Activated T-helper 2 cell treated with anti-CD3 and anti-CD28 coated beads, Interferon-gamma antibody, Interleukin-2, Interleukin-4, amounts not matched to agents 10 μg/mL and 5 μg/mL and 100 μg/mL, durations not matched to agents 14 hours and 24 hours and 36 hours (primary cell): ENCODE measurements at regions of chr10 and their contacts with region 1.

Region 1: GRCh38 chr10:133394064-133394663 is at the start of gene MTG1:
- DNase-seq: peak; percentile 93
- H3K4me3 Mint-ChIP-seq: peak within 1 kb of the TSS; percentile 96
- H3K27ac Mint-ChIP-seq: peak within 1 kb of the TSS; percentile 96
- H3K4me1 Mint-ChIP-seq: peaks cover 34% of the 10 kb centered on the region
- H3K27me3 Mint-ChIP-seq: no peaks in the 10 kb centered on the region
- total RNA-seq, gene MTG1: 67.6 and 69.0 TPM in 2 replicates

Region 2: GRCh38 chr10:133276435-133277201 is 117.5 kb before region 1 on chr10 and contains the start of gene ADAM8:
- intact Hi-C with region 1: loop called (anchors 1 kb)
- DNase-seq: peak; percentile 66
- H3K4me3 Mint-ChIP-seq: peak within 1 kb of the TSS; percentile 91
- H3K27ac Mint-ChIP-seq: peak within 1 kb of the TSS; percentile 84
- H3K4me1 Mint-ChIP-seq: peaks cover 18% of the 10 kb centered on the region
- H3K27me3 Mint-ChIP-seq: no peaks in the 10 kb centered on the region
- total RNA-seq, gene ADAM8: 214 and 220 TPM in 2 replicates

Region 3: DNA sequence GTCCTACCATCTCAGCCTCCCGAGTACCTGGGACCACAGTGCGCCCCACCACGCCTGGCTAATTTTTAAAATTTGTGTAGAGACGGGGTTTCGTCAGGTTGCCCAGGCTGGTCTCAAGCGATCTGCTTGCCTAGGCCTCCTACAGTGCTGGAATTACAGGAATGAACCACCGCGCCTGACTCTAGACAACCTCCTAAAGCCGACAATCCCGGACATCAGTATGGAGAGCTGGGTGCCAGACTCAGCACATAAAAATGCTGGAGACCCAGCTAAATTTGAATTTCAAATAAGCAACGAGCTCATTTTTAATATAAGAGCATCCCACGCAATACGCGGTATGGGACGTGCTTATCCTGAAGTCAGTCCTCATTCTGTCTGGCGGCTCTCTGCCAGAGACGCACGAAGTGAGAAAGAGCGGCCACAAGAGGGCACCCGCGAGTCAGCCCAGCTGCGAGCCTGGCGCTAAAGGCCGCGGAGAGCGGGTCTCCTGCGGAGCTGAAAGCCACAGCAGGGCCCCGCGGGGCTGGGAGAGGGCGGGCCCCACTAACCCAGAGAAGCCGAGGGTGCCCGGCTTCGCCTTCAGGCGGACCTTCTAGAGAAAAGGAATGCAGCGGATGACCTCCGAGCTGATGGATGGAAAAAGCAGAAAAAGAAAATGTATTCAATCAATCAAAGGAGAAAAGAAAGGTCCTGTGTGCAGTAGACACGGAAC is 64.5 kb before region 1 on chr10:
- intact Hi-C with region 1: loop called (anchors 5 kb)
- DNase-seq: peak; percentile 76
- H3K4me3 Mint-ChIP-seq: peak overlapping the region; percentile 60
- H3K27ac Mint-ChIP-seq: no peak overlapping the region
- H3K4me1 Mint-ChIP-seq: no peaks in the 10 kb centered on the region
- H3K27me3 Mint-ChIP-seq: peaks cover 63% of the 10 kb centered on the region

Region 4: DNA sequence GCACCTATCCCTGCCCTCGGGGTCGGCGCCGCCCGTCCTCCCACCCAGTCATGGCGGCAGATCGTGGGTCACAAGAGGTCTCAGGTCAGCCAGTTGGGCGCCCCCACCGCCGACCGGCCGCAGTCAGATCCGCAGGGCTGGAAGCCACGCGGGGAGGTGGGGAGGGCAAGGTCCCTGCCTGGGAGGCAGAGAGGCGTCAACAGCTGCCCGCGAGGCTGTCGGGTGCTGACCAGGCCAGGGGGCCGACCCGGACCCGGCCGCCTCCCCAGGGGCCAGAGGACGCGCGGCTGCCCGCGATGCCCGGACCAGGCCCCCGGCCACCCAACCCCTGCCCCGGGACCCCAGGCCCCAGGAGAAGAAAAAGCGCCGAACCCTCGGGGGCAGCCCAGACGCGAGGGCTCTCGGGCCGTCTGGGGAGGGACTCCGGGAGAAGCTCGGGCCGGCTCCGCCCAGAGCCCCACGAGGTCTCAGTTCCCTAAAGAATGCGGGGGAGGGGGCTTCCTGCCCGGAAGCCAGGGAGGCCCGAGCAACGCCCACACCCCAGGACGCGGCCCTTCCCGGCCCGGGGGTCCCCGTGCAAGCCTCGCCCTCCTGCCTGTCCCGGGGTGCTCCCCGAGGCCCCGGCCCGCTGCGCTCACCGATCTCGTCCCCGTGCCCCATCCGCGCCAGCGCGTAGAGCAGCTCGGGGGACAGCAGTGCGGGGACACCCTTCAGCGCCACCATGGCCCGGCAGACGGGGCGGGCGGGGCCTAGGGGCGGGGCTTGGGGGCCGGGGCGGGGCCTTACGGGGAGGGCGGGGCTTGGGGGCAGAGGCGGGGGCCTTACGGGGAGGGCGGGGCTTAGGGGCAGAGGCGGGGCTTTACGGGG is 36.6 kb before region 1 on chr10 and contains the start of gene FUOM:
- intact Hi-C with region 1: loop called (anchors 1 kb)
- DNase-seq: peak; percentile 66
- H3K4me3 Mint-ChIP-seq: peak within 1 kb of the TSS; percentile 78
- H3K27ac Mint-ChIP-seq: peak within 1 kb of the TSS; percentile 60
- H3K4me1 Mint-ChIP-seq: peaks cover 6% of the 10 kb centered on the region
- H3K27me3 Mint-ChIP-seq: no peaks in the 10 kb centered on the region
- total RNA-seq, gene FUOM: 44.0 and 45.7 TPM in 2 replicates

Region 5: DNA sequence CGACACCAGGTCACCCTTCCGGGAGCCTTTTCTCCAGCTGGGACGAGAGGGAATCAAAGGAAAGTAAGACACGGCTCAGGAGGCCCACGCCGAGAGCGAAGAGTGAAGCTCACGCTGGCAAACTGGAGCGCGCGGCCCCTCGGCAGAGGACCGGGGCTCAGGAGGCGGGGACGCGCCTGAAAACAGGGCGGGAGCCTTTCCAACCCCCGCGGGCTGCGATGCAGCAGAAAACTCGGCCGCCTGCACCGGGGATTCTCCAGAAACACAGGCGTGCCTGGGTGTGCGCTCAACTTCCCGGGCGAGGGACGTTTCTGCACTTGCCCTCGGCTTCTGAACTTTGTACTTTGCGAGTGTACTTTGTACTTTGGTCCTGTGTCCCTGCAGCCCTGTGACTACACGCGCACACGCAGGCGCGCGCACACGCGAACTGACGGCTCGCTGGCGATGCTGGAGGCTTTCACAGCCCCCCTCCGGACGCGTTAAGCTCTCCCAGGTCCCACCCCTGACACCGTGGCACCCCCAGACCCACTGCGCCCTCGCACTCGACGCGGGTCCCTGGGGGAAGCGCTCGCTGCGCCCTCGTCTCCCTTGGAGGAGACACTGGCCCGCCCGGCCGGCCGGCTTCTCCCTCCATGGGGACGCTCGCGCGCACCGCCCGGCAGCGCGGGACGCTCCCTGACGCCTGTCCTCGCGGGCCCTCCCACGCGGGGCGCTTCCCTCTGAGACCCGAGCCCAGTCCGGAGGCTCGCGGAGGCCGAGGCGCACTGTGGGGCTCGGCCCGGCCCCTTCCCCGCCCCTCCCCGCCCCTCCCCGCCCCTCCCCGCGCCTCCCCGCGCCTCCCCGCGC is 15.7 kb before region 1 on chr10:
- intact Hi-C with region 1: loop called (anchors 1 kb)
- DNase-seq: peak; percentile 58
- H3K4me3 Mint-ChIP-seq: peak overlapping the region; percentile 69
- H3K27ac Mint-ChIP-seq: no peak overlapping the region
- H3K4me1 Mint-ChIP-seq: peaks cover 9% of the 10 kb centered on the region
- H3K27me3 Mint-ChIP-seq: peaks cover 5% of the 10 kb centered on the region

Region 6: DNA sequence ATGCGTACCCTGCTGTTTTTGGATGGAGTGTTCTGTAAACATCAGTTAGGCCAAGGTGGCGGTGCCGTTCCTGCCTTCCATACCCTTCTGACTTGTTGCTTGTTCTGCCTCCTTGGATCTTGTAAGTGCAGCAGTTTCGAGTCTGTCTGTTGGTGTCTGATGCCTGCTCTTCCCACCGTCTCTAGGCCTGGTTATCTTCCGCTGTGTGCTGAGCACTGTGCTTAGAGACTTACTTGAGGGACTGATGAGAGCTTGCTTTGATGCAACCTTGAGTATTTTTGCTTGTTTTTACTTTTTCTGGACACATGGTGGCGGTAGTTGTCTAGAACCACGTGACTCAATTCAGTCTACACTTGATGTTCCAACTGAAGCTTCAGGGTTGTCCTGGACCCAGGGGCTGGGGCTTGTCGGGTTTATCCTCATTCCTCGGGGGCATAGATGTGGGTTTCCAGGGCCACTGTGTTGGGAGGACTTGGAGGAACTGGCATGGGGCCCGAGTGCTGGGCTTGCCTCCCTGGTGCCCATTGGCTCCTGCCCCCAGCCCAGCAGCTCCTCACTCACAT is 44.6 kb after region 1 on chr10:
- intact Hi-C with region 1: no loop called
- DNase-seq: no peak
- H3K4me3 Mint-ChIP-seq: no peak overlapping the region
- H3K27ac Mint-ChIP-seq: no peak overlapping the region
- H3K4me1 Mint-ChIP-seq: peaks cover 11% of the 10 kb centered on the region
- H3K27me3 Mint-ChIP-seq: peaks cover 13% of the 10 kb centered on the region